Mammary epithelial cell (primary cell): ENCODE measurements at regions of chr15 and their contacts with region 1.

Region 1: DNA sequence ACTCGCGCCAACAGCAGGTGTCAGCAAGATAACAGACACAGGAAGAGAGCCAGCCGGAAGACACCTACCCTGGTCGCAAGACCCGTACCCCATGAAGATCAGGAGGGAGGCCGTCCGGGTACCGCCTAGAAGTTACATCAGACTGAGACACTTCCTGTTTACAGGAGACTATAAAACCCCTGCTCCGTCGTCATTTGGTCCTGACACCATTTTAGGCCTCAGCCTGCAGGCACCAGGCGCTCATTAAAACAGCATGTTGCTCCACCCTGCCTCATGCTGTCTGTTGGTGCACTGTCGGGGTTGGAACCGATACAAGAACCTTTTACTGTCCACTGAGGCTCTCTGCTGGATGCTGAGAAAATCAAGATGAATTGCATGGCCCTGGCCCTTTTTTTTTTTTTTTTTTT is 15.6 kb upstream of the PRTG start:
- DNase-seq: no peak
- H3K4me3 ChIP-seq: no peak overlapping the region
- H3K27ac ChIP-seq: no peak overlapping the region
- H3K4me1 ChIP-seq: no peaks in the 10 kb centered on the region
- H3K27me3 ChIP-seq: no peaks in the 10 kb centered on the region
- CTCF ChIP-seq: no peak

Region 2: GRCh38 chr15:55535436-55535835 is 223.1 kb before region 1 on chr15:
- CTCF ChIA-PET with region 1: no interaction called
- dilution Hi-C with region 1: no loop called
- in situ Hi-C with region 1: no loop called
- intact Hi-C with region 1: no loop called
- DNase-seq: no peak
- H3K4me3 ChIP-seq: no peak overlapping the region
- H3K27ac ChIP-seq: no peak overlapping the region
- H3K4me1 ChIP-seq: no peaks in the 10 kb centered on the region
- H3K27me3 ChIP-seq: no peaks in the 10 kb centered on the region
- CTCF ChIP-seq: no peak

Region 3: DNA sequence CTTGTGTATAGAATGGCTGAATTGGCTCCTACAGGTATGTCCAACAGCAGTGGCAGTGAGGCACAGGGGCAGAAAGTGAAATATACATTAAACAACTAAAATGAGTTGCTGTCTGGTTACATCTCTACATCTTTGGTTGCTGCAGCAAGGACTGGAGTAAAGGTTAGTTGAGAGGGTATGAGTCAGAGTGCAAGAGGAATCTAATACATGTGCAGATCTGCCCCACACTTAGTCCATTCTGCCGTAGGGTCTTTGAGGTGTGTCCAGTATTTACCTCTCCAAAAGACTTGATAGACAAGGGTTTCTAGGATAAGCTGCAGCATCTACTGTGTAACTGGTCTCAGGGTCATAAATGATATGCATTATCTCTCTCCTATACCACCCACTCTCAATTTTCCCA is 241.1 kb after region 1 on chr15:
- CTCF ChIA-PET with region 1: no interaction called
- dilution Hi-C with region 1: no loop called
- in situ Hi-C with region 1: no loop called
- intact Hi-C with region 1: no loop called
- DNase-seq: peak; percentile 78
- H3K4me3 ChIP-seq: no peak overlapping the region
- H3K27ac ChIP-seq: peak overlapping the region; percentile 6
- H3K4me1 ChIP-seq: peaks cover 47% of the 10 kb centered on the region
- H3K27me3 ChIP-seq: no peaks in the 10 kb centered on the region
- CTCF ChIP-seq: no peak

Region 4: DNA sequence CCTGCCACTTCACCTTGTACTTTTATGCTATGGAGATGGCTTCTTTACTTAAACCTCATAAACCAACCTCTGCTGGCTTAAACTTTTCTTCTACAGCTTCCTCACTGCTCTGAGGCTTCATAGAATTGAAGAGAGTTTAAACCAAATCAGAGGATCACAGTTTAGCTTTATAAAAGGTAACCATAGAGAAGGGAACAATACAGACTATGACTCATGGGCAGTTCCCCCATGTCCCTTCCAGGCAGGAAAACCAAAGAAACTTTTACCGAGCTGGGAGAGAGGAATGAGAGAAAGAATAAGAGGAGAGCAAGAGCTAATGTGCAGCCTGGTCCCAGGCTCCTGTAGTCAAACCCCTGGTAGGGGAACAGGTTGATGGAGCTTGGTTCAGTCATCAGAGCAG is 288.8 kb after region 1 on chr15:
- CTCF ChIA-PET with region 1: interaction called, 10 read pairs
- dilution Hi-C with region 1: no loop called
- in situ Hi-C with region 1: no loop called
- intact Hi-C with region 1: no loop called
- DNase-seq: peak; percentile 70
- H3K4me3 ChIP-seq: no peak overlapping the region
- H3K27ac ChIP-seq: peak overlapping the region; percentile 59
- H3K4me1 ChIP-seq: peaks cover 27% of the 10 kb centered on the region
- H3K27me3 ChIP-seq: no peaks in the 10 kb centered on the region
- CTCF ChIP-seq: no peak